Left cardiac atrium (tissue), 4 donors: ENCODE measurements at regions of chr12 and their contacts with region 1.

Region 1: DNA sequence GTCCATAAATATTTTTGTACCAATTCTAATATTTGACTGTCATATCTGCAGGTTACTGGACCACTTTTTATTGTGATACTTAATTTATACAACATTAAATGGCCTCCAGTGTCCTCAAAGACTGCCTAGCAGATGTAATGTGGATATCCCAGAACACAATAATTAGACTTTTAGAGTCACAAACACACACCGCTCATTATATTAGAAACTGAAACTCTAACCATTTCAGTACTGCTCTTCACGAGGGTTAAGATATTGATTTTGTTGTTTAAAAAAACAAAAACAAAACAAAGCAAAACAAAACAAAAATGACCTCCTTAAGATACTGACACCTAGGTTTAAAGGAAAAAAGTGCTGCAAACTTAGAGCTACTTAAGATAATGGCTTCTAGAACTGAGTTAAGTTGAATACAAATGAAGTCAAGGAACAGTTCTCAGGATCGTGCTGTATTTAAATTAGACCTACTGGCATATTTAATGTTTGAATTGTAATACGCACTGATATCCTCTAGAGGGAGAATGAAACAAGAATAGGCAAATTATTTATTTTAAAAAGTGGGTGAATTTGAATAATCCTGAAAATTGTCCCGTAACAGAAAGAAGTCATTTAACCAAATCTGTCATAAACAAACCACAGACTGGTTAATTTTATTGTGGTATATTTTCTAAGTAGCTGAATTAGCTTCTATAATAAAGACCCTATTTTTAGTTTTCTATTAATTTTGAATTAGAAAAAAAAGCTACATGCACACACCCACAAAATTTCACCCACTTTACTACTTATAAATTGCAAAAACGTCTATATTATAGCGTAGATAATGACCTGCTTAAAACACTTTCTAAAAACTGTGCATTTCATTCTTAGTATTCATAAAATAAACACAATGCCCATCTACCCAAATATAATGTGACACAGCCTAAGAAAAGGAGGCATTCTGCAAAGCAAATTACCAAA is 395.2 kb upstream of the DCN start:
- DNase-seq: no peak
- ATAC-seq: peak; percentile 47 to 51

Region 2: DNA sequence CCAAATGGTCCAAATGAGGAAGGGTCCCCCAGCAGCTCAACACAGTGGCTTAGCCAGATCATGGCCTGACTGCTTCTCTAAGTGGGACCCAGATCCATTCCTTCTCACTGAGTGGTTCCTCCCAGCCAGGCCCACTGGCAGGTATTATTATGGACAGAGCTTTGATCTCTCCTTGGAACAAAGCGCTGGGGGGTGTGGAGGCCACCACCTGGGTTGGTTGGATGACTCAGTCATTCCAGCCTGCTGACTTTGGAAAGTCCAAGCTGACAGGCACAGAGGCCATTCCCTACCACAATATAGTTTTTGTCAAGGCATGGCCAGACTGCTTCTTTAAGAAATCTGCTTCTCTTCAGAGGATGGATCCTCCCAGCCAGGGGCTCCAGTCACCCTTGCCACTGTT is 226.7 kb after region 1 on chr12:
- intact Hi-C with region 1: loop called in 1 of 2 experiments (anchors 10 kb)
- DNase-seq: no peak
- ATAC-seq: no peak